B cell (primary cell): ENCODE measurements at regions of chr17 and their contacts with region 1.

Region 1: DNA sequence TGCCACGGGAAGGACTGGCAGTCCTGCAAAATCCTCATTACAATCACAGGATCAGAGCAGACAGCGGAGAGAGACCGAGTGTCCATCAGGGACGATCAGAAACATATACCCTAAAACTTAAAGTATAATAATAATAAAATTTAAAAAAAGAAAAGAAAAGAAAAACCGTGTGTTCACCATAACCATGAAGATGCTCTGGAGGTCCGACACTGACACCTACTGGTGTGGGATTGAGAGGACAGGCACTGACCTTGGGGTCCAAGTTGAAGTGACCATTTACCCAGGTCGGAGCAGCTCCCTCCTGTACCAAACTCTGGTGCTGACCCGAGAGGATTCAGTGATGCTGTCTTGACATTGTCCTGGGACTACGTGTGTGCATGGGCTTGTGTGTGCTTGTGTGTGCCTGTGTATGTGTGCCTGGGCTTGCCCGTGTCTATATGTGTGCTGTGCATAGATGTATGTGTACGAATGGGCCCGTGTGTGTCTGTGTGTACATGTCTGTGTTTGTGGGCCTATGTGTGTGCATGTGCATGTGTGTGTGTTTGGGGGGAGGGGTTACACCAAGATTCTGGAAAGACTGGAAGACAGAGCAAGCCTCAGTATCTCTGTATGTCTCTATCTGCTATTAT is 10.0 kb upstream of the CD300LD start:
- DNase-seq: peak; percentile 53
- ATAC-seq: no peak
- H3K4me3 ChIP-seq: no peak overlapping the region
- H3K4me3 Mint-ChIP-seq: no peak overlapping the region
- H3K27ac ChIP-seq: no peak overlapping the region
- H3K27ac Mint-ChIP-seq: no peak overlapping the region
- H3K4me1 ChIP-seq: peaks cover 49 to 52% of the 10 kb centered on the region in 2 donors
- H3K4me1 Mint-ChIP-seq: peaks cover 51% of the 10 kb centered on the region
- H3K27me3 ChIP-seq: peaks cover 0 to 2% (median 0%) of the 10 kb centered on the region in 4 experiments
- H3K27me3 Mint-ChIP-seq: no peaks in the 10 kb centered on the region
- CTCF ChIP-seq: peak; percentile 66

Region 2: GRCh38 chr17:74639704-74640151 is 37.7 kb after region 1 on chr17:
- CTCF ChIA-PET with region 1: interaction called, 4 read pairs
- POLR2A ChIA-PET with region 1: no interaction called
- intact Hi-C with region 1: loop called (anchors 5 kb)
- DNase-seq: peak; percentile 71
- ATAC-seq: peak; percentile 70
- H3K4me3 ChIP-seq: peak overlapping the region in 4 of 5 experiments; percentile 3 to 42 (median 9)
- H3K4me3 Mint-ChIP-seq: peak overlapping the region; percentile 79
- H3K27ac ChIP-seq: peak overlapping the region; percentile 38 to 41
- H3K27ac Mint-ChIP-seq: peak overlapping the region; percentile 83
- H3K4me1 ChIP-seq: peaks cover 83 to 85% of the 10 kb centered on the region in 2 donors
- H3K4me1 Mint-ChIP-seq: peaks cover 77% of the 10 kb centered on the region
- H3K27me3 ChIP-seq: peaks cover 0 to 13% (median 2%) of the 10 kb centered on the region in 4 experiments
- H3K27me3 Mint-ChIP-seq: peaks cover 8% of the 10 kb centered on the region
- CTCF ChIP-seq: no peak

Region 3: DNA sequence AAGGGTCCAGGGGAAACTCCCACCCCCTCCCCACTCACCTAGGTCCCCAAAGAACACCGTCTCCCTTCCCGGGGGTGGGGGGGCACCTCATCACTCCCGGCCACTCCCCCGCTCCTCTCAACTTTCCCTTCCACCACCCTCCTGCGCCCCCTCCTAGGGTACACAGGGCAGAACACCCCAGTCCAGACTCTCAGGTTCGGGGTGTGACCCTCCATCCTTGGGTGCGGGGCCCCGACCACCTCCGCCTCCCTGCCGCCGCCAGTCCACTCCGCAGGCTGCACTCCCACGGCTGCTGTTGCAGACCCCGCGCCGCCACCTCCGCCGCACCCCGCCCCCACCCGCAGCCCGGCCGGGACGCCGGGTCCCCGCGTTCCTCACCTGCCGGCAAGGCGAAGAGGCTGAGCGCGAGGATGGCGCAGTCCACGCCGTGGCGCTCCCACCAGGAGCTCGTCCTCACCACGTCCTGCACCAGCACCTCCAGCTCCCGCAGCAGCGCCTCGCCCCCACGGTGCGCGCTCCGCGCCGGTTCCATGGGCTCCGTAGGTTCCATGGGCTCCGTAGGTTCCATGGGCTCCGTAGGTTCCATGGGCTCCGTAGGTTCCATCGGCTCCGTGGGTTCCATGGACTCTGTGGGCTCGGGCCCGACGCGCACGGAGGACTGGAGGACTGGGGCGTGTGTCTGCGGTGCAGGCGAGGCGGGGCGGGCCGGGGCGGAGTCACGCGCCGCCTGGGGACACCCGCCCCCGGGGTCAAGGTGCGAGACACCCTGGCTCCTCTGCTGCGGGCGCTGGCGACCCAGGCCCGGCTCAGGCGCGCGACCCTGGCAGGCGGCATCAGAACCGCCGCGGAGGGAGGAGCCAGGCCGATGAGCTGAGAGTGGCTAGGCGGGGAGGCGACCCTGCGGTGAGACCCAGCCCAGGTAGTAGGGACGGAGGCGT is 291.2 kb after region 1 on chr17 and contains the start of gene FADS6:
- CTCF ChIA-PET with region 1: no interaction called
- POLR2A ChIA-PET with region 1: no interaction called
- intact Hi-C with region 1: no loop called
- DNase-seq: no peak
- ATAC-seq: peak; percentile 36
- H3K4me3 ChIP-seq: peak within 1 kb of the TSS in 2 of 5 experiments; percentile 15 to 36
- H3K4me3 Mint-ChIP-seq: peak within 1 kb of the TSS; percentile 71
- H3K27ac ChIP-seq: no peak within 1 kb of the TSS
- H3K27ac Mint-ChIP-seq: peak within 1 kb of the TSS; percentile 34
- H3K4me1 ChIP-seq: peaks cover 6 to 16% of the 10 kb centered on the region in 2 donors
- H3K4me1 Mint-ChIP-seq: peaks cover 2% of the 10 kb centered on the region
- H3K27me3 ChIP-seq: peaks cover 0 to 44% (median 9%) of the 10 kb centered on the region in 4 experiments
- H3K27me3 Mint-ChIP-seq: peaks cover 45% of the 10 kb centered on the region
- CTCF ChIP-seq: no peak
- total RNA-seq, gene FADS6: not detected in 2 replicates

Region 4: GRCh38 chr17:75069783-75070182 is 467.7 kb after region 1 on chr17:
- CTCF ChIA-PET with region 1: no interaction called
- POLR2A ChIA-PET with region 1: no interaction called
- intact Hi-C with region 1: no loop called
- DNase-seq: no peak
- ATAC-seq: no peak
- H3K4me3 ChIP-seq: no peak overlapping the region
- H3K4me3 Mint-ChIP-seq: no peak overlapping the region
- H3K27ac ChIP-seq: no peak overlapping the region
- H3K27ac Mint-ChIP-seq: no peak overlapping the region
- H3K4me1 ChIP-seq: no peaks in the 10 kb centered on the region
- H3K4me1 Mint-ChIP-seq: no peaks in the 10 kb centered on the region
- H3K27me3 ChIP-seq: no peaks in the 10 kb centered on the region
- H3K27me3 Mint-ChIP-seq: no peaks in the 10 kb centered on the region
- CTCF ChIP-seq: no peak